Left ventricle myocardium inferior (tissue), 1 donor: ENCODE measurements at regions of chr2 and their contacts with region 1.

Region 1: DNA sequence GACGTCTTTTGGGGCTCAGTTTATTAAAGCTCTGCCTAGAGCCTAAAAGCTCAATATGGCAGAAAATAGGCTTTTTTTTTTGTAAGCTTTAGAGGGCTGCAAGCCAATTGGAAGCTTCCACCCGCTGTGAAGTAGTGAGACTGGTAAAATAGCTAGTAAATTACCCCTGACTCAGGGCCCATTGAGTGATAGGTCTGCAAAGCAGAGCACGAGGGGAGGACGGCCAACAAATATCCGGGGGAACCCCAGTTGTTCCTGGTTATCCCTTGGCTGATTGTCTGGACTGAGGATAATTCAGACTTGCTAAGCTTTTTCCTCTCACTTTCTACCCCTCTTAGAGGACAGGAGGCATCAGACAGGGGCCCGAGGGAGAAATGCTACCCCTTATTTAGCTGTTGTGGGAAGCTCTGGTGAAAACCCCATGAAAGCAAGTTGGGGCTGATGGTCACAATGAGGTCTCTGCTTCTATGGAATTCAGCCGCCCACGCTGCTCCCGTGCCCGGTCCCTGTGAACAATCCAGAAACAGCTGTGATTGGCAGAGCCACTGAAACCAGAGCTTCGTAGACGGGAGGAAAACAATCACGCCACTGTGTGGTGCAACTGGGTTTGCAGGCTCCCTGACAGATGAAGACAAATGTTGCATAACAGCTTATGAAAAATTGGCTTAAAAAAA is 141.9 kb upstream of the LGALSL start:
- DNase-seq: peak; percentile 72
- H3K4me3 ChIP-seq: peak overlapping the region; percentile 32
- H3K27ac ChIP-seq: peak overlapping the region; percentile 64
- H3K4me1 ChIP-seq: peaks cover 27% of the 10 kb centered on the region
- H3K27me3 ChIP-seq: no peaks in the 10 kb centered on the region
- CTCF ChIP-seq: peak; percentile 74

Region 2: DNA sequence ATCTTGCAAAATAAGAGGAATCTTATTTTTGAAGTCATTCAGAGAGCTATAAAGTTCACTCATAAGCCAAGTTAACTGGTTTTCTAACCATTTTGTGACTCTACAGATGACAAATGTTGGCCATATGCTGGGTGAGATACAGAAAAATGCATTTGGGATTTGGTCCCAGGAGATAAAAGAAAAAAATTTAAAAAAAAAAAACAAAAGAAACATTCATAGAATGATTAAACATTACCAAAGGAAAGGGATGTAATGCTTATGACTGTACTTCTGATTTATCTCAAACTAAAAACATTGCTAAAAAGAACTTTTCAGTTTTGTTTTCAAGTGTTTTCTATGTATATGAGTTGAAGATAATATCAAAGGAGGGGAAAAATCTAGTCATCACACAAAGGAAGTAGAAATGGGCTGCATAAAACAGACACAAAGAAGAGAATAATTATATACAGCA is 210.9 kb before region 1 on chr2:
- intact Hi-C with region 1: no loop called
- DNase-seq: no peak
- H3K4me3 ChIP-seq: no peak overlapping the region
- H3K27ac ChIP-seq: no peak overlapping the region
- H3K4me1 ChIP-seq: peaks cover 32% of the 10 kb centered on the region
- H3K27me3 ChIP-seq: no peaks in the 10 kb centered on the region
- CTCF ChIP-seq: no peak

Region 3: GRCh38 chr2:64133828-64134227 is 178.3 kb before region 1 on chr2:
- intact Hi-C with region 1: loop called (anchors 10 kb)
- DNase-seq: no peak
- H3K4me3 ChIP-seq: no peak overlapping the region
- H3K27ac ChIP-seq: no peak overlapping the region
- H3K4me1 ChIP-seq: peaks cover 73% of the 10 kb centered on the region
- H3K27me3 ChIP-seq: no peaks in the 10 kb centered on the region
- CTCF ChIP-seq: no peak